ENCODE measurements at regions of chr16 and their contacts with region 1.

Region 1: DNA sequence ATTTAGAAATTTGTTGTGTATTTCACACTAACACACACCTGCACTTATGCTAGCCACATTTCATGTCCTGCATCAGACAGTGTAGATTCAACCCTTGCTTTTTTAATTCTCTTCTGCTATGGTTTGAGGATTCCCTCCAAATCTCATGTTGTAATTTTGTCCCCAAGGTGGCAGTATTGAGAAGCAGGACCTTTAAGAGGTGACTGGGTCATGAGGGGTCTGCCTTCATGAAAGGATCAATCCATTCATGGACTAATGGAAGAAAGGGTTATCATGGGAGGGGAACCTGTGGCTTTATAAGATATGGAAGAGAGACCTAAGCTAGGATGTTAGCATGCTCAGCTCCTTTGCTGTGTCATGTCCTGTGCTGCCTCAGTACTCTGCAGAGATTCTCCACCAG is 1032.2 kb downstream of the CDH11 start:
- ATAC-seq: peak in 4 of 8 experiments; percentile 39 to 58 (median 50)
- H3K4me3 ChIP-seq: no peak overlapping the region
- H3K27ac ChIP-seq: no peak overlapping the region
- H3K4me1 ChIP-seq: peaks cover 3 to 4% of the 10 kb centered on the region in 2 donors

Region 2: DNA sequence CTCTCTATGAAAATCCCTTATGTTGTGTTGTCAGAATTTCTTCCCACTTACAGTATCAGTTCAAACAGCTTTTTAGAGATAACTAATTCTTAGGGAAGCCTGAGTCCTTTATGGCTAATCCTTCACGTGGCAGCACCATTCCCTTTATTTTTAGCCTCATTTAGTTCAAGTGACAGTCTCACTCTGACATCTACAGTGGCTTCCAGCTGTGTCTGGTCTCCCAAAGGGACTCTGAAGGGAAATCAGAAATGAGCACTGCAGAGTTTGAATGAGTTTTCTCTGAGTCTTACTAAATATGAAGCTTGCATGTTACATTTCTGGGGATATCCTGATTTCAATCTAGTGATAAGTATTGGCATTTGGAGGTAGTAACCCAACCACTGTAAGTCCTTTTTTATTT is 71.9 kb before region 1 on chr16:
- in situ Hi-C with region 1: no loop called
- ATAC-seq: no peak
- H3K4me3 ChIP-seq: no peak overlapping the region
- H3K27ac ChIP-seq: no peak overlapping the region
- H3K4me1 ChIP-seq: no peaks in the 10 kb centered on the region

Region 3: GRCh38 chr16:64455254-64455653 is 365.6 kb after region 1 on chr16:
- in situ Hi-C with region 1: loop called in 1 of 9 experiments (anchors 25 kb)
- ATAC-seq: peak in 4 of 8 experiments; percentile 25 to 37 (median 28)
- H3K4me3 ChIP-seq: no peak overlapping the region
- H3K27ac ChIP-seq: no peak overlapping the region
- H3K4me1 ChIP-seq: peaks cover 0 to 5% of the 10 kb centered on the region in 2 donors

Region 4: DNA sequence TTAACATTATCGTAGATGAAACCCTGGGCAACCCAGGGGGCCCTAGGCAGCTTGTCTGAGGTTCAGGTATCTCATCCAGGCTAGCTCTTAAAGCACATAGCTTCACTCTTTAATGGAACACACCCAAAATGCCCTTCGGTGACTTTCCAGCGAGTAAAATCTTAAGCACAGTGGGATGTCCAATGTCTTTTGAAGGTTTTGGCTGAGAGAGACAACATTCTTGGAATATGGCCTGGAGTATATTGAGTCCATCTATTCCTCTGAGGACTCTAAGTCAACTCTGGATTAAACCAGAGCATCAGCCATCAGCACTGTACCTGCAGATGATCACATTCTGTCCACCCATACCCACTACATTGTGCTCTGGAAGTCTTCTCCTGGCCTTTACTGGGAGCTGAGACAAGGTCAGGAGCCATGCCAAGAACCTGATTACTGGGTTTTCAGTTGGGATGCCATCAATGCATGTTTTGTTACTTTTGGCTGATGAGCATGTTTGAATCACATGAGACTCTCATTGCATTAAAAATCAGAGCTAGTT is 1095.6 kb after region 1 on chr16:
- in situ Hi-C with region 1: no loop called
- ATAC-seq: no peak
- H3K4me3 ChIP-seq: no peak overlapping the region
- H3K27ac ChIP-seq: no peak overlapping the region
- H3K4me1 ChIP-seq: no peaks in the 10 kb centered on the region

Measured in motor neuron (in vitro differentiated cells).